ENCODE measurements at regions of chr20 and their contacts with region 1.

Region 1: DNA sequence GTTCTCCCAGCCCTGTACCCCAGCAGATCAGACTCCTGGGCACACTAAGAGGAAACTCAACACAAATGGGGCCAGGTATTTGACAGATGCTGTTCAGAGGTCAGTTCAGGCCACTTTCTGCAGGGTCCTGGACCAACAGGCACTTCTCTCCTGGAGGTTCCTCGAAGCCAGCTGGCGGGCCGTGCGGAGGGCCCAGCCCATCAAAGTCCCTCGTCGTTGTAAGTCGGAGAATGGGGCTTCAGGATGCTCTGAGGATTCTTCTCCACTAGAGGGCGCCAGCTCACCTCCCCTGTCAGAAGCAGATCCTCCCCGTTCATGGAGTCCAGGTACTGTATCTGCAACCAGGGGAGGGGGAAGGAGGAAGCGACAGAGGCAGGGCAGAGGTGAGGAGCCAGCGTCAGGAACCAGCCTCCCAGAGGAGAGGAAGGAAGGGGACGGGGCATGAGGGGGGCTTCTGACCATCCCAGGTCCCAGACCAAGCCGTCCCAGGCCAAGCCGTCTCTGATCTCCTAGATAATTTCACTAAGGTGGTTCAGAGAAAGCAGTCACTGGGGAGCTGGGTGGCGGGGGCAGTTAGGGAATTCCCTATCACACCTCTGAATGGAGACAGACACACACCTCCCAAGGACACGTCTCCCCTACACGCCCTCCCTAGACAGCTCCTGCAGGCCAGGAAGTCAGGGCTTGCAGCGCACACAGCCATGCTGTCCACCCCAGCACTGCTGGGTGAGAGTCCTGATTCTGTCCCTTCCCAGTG is 11.7 kb upstream of the FAM83C start:
- DNase-seq: peak; percentile 81 to 84
- H3K4me3 ChIP-seq: no peak overlapping the region
- H3K27ac ChIP-seq: no peak overlapping the region
- H3K4me1 ChIP-seq: peaks cover 17 to 35% of the 10 kb centered on the region in 2 donors
- H3K27me3 ChIP-seq: no peaks in the 10 kb centered on the region
- CTCF ChIP-seq: peak; percentile 72 to 95 (median 89)
- POLR2A ChIP-seq: no peak

Region 2: DNA sequence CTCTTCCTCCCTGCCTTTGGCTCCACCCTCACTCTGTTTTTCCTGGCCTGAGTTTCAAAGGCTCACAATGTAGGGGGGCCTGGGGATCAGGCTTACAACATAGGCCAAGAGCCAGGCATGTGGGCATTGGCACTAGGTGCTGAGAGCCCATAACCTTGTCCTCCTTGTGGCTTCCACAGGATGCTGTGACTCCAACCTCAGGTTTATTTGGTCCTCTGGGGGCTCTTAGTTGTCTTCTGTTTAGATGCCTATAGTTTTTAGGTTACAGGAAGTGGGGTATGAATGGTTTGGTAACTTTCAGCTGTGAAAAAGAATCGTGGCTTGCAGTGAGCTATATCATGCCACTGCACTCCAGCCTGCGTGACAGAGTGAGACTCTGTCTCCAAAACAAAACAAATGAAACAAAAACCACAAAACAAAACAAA is 51.9 kb before region 1 on chr20:
- intact Hi-C with region 1: no loop called
- DNase-seq: peak in 1 of 2 donors; percentile 39
- H3K4me3 ChIP-seq: no peak overlapping the region
- H3K27ac ChIP-seq: peak overlapping the region; percentile 45 to 68 (median 50)
- H3K4me1 ChIP-seq: peaks cover 10 to 13% of the 10 kb centered on the region in 2 donors
- H3K27me3 ChIP-seq: no peaks in the 10 kb centered on the region
- CTCF ChIP-seq: no peak
- POLR2A ChIP-seq: no peak

Region 3: GRCh38 chr20:35443003-35443402 is 139.1 kb after region 1 on chr20:
- intact Hi-C with region 1: loop called (anchors 2 kb)
- DNase-seq: no peak
- H3K4me3 ChIP-seq: no peak overlapping the region
- H3K27ac ChIP-seq: no peak overlapping the region
- H3K4me1 ChIP-seq: peaks cover 3 to 4% of the 10 kb centered on the region in 2 donors
- H3K27me3 ChIP-seq: no peaks in the 10 kb centered on the region
- CTCF ChIP-seq: no peak
- POLR2A ChIP-seq: no peak

Measured in thyroid gland (tissue), 4 donors.